Heart left ventricle (tissue), 16 donors: ENCODE measurements at regions of chr13 and their contacts with region 1.

Region 1: DNA sequence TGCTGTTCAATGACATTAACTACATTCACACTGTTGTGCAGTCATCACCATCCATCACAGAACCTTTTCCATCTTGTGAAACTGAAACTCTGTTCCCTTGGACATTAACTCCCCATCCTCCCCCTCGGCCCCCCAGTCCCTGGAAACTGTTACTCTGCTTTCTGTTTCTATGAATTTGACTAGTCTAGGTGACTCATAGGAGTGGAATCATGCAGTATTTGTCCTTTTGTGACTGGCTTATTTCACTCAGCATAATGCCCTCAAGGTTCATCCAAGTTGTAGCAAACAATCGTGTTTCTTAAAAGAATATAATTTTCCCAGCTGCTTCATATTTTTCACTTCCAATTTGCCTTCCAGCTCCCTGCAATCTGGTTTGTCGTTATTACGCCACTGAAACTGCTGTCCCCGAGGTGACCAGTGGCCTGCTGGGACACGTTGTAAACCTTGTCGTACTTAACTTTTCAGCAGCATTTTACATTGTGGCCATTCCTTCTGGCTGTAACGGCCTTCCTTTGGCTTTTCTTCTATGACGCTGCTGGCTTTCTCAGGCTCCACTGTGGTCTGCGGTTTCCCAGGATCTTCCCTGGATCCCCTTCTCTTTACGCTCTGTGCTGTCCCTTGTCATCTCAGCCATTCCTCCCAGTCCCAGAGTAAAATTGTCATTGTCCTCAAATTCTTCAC is 74.0 kb downstream of the DHRS12 start:
- DNase-seq: peak in 2 of 5 donors; percentile 36 to 47
- ATAC-seq: peak in 3 of 4 donors; percentile 34 to 76 (median 70)
- H3K4me3 ChIP-seq: peak overlapping the region in 4 of 12 donors; percentile 8 to 13 (median 12)
- H3K27ac ChIP-seq: peak overlapping the region; percentile 11 to 75 (median 53)
- H3K4me1 ChIP-seq: peaks cover 0 to 55% (median 27%) of the 10 kb centered on the region in 12 donors
- H3K27me3 ChIP-seq: no peaks in the 10 kb centered on the region
- CTCF ChIP-seq: no peak
- POLR2A ChIP-seq: no peak

Region 2: GRCh38 chr13:51435002-51435578 is 294.9 kb before region 1 on chr13:
- intact Hi-C with region 1: loop called in 4 of 10 experiments (anchors 5 to 10 kb)
- DNase-seq: no peak
- ATAC-seq: no peak
- H3K4me3 ChIP-seq: no peak overlapping the region
- H3K27ac ChIP-seq: no peak overlapping the region
- H3K4me1 ChIP-seq: peaks cover 0 to 5% (median 0%) of the 10 kb centered on the region in 12 donors
- H3K27me3 ChIP-seq: no peaks in the 10 kb centered on the region
- CTCF ChIP-seq: peak; percentile 21 to 69 (median 51)
- POLR2A ChIP-seq: no peak

Region 3: DNA sequence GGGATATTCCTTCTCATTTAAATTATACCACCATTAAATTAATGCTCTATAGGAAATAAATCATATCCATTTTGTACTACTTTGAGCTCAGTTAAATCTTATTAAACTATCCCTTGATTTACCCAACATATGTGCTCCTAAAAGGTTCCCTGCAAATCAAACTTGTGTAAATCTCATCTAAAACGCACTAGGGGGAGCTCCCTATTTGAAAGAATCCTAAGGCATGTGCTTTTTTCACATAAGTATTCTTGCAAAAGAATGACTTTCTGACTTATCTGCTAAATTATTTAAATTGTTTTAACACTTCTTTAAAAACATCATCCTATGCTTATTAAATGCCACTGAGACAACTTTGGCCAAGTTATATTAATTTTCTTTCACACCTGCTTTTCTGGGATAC is 285.1 kb before region 1 on chr13:
- intact Hi-C with region 1: loop called in 9 of 10 experiments (anchors 5 to 10 kb)
- DNase-seq: no peak
- ATAC-seq: peak in 1 of 4 donors; percentile 37
- H3K4me3 ChIP-seq: no peak overlapping the region
- H3K27ac ChIP-seq: no peak overlapping the region
- H3K4me1 ChIP-seq: peaks cover 0 to 16% (median 3%) of the 10 kb centered on the region in 12 donors
- H3K27me3 ChIP-seq: no peaks in the 10 kb centered on the region
- CTCF ChIP-seq: peak in 8 of 12 donors; percentile 14 to 51 (median 36)
- POLR2A ChIP-seq: no peak

Region 4: GRCh38 chr13:51452361-51453206 is 277.4 kb before region 1 on chr13 and contains the start of gene INTS6:
- intact Hi-C with region 1: loop called in 9 of 10 experiments (anchors 5 to 10 kb)
- DNase-seq: peak; percentile 99 to 100 (median 100)
- ATAC-seq: peak; percentile 92 to 98 (median 96)
- H3K4me3 ChIP-seq: peak within 1 kb of the TSS; percentile 83 to 99 (median 94)
- H3K27ac ChIP-seq: peak within 1 kb of the TSS; percentile 98 to 100 (median 99)
- H3K4me1 ChIP-seq: peaks cover 0 to 43% (median 21%) of the 10 kb centered on the region in 12 donors
- H3K27me3 ChIP-seq: no peaks in the 10 kb centered on the region
- CTCF ChIP-seq: no peak
- POLR2A ChIP-seq: peak; percentile 100
- total RNA-seq, gene INTS6: 18.4 to 30.2 (median 24.4) TPM

Region 5: GRCh38 chr13:51614350-51614786 is 115.6 kb before region 1 on chr13:
- intact Hi-C with region 1: loop called in 2 of 10 experiments (anchors 10 kb)
- DNase-seq: peak in 4 of 5 donors; percentile 35 to 62 (median 46)
- ATAC-seq: peak; percentile 51 to 82 (median 78)
- H3K4me3 ChIP-seq: peak overlapping the region in 9 of 12 donors; percentile 3 to 35 (median 17)
- H3K27ac ChIP-seq: peak overlapping the region in 3 of 12 donors; percentile 36 to 65 (median 55)
- H3K4me1 ChIP-seq: peaks cover 0 to 39% (median 22%) of the 10 kb centered on the region in 12 donors
- H3K27me3 ChIP-seq: no peaks in the 10 kb centered on the region
- CTCF ChIP-seq: no peak
- POLR2A ChIP-seq: no peak

Region 6: DNA sequence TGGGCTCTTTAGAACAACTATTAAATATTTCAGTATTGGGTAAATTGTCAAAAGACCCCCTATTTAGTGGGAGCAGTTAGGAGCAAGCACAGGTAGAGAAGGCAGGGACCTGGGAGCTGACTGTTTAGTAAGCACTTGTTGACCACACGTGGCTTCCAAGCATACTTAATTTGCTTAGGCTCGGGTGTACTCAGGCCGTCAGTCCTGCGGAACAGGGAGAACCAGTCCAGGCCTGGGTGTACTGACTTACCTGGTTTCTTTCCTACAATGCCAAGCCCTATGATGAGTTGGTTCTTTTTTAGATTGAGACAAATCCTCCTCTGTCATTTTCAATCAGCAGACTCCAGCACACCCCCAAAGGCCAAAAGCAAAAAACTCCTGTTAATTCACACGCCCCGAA is 55.7 kb before region 1 on chr13:
- intact Hi-C with region 1: loop called in 1 of 10 experiments (anchors 10 kb)
- DNase-seq: no peak
- ATAC-seq: peak in 1 of 4 donors; percentile 26
- H3K4me3 ChIP-seq: no peak overlapping the region
- H3K27ac ChIP-seq: no peak overlapping the region
- H3K4me1 ChIP-seq: peaks cover 0 to 30% (median 15%) of the 10 kb centered on the region in 12 donors
- H3K27me3 ChIP-seq: no peaks in the 10 kb centered on the region
- CTCF ChIP-seq: no peak
- POLR2A ChIP-seq: no peak

Region 7: DNA sequence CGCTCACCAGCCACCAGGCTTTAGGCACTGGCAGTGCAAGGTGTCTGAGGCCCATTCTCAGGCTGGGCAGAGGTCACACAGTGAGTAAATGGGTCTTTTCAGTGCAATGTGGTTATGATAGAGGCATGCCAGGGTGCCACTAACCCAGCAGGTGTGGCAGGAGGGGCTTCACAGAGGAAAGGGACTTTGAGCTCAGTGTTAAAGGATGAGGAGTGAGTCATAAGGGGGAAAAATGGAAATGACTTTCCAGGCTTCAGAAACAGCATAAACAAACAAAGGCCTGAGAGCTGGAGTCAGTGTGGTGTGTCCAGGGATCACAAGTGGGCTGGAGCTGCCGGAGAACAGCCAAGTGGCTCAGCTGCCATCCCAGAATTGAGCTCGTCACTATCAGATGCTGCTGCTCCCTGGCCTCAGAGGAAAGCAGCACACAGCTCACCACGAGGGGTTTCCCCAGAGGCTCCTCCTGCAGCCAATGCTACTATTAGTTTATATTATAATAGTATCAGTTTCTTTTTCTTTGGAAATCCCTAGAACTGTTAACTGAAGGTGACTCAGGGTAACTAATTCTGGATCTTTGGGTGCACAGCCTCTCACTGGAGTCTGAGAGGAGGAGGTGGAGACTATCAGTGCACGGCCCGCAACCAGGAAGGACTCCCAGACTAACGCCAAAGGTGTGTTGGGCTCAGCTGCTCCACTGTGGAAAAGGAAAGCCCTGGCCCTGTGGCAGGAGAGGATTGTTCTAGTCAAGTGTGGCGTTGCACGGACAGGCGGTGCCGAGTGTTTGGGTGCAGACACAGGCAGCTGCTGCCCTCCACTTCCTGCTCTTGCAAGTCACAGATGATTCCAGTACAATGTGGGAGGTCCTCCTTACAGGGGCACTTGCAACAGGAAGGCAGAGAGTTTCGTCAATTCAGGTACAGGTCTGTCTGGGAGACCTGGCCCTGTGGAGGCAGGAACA is 34.5 kb after region 1 on chr13:
- intact Hi-C with region 1: no loop called
- DNase-seq: peak; percentile 65 to 83 (median 72)
- ATAC-seq: peak; percentile 81 to 93 (median 86)
- H3K4me3 ChIP-seq: peak overlapping the region in 3 of 12 donors; percentile 5 to 26 (median 21)
- H3K27ac ChIP-seq: peak overlapping the region; percentile 39 to 92 (median 72)
- H3K4me1 ChIP-seq: peaks cover 0 to 35% (median 29%) of the 10 kb centered on the region in 12 donors
- H3K27me3 ChIP-seq: no peaks in the 10 kb centered on the region
- CTCF ChIP-seq: peak in 1 of 12 donors; percentile 14
- POLR2A ChIP-seq: no peak